Spleen (tissue), 13 donors: ENCODE measurements at regions of chrX and their contacts with region 1.

Region 1: DNA sequence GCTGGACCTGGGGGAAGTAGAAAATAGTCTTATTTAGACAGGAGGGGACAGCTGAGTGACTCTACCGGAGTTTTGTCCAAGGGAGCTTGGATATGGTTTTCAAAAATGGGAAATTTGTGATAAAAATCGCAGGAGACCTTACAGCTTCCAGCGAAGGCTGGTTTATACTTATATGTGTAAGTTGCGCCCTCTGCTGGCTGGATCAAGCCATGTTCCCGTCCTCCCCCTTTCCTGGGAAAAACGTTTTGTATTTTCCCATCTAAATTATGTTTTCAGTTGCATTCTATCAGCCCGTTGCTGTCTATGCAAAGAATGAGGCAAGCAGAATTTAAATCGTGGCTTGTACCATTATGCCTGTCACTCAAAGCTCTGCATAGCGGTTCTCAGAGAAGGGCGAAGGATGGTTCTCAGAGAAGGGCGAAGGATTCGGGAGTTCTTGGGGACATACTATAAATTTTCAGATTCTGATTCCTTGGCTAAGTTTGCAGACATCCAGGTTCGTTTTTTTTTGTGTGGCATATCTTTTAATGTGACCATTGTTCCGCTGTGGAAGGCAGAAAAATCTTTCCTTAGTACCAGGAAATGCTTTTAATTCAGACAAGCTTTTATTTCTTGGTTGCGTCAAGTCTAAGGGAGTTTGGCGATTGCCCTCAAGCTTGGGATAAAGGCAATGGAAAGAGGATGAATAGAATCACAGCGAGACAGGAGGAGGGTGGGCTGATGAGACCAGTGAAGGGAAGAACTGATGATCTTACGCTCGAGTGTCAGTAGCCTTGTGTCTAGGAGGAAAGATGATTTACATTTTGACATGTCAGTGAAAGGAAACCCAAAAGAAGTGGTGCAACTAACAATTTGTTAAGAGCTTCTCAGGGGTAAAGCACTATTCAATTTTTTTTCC is 128.5 kb upstream of the ARX start:
- DNase-seq: no peak
- H3K4me3 ChIP-seq: no peak overlapping the region
- H3K27ac ChIP-seq: no peak overlapping the region
- H3K4me1 ChIP-seq: no peaks in the 10 kb centered on the region
- H3K27me3 ChIP-seq: peaks cover 0 to 17% (median 0%) of the 10 kb centered on the region in 7 donors
- CTCF ChIP-seq: peak; percentile 31 to 75 (median 62)
- POLR2A ChIP-seq: no peak

Region 2: GRCh38 chrX:24759786-24760185 is 384.5 kb before region 1 on chrX:
- intact Hi-C with region 1: loop called (anchors 5 kb)
- DNase-seq: no peak
- H3K4me3 ChIP-seq: no peak overlapping the region
- H3K27ac ChIP-seq: no peak overlapping the region
- H3K4me1 ChIP-seq: no peaks in the 10 kb centered on the region
- H3K27me3 ChIP-seq: peaks cover 0 to 6% (median 0%) of the 10 kb centered on the region in 7 donors
- CTCF ChIP-seq: no peak
- POLR2A ChIP-seq: no peak

Region 3: GRCh38 chrX:24846551-24847157 is 297.6 kb before region 1 on chrX:
- intact Hi-C with region 1: loop called (anchors 10 kb)
- DNase-seq: no peak
- H3K4me3 ChIP-seq: no peak overlapping the region
- H3K27ac ChIP-seq: no peak overlapping the region
- H3K4me1 ChIP-seq: no peaks in the 10 kb centered on the region
- H3K27me3 ChIP-seq: no peaks in the 10 kb centered on the region
- CTCF ChIP-seq: no peak
- POLR2A ChIP-seq: no peak

Region 4: GRCh38 chrX:25285598-25285997 is 141.3 kb after region 1 on chrX:
- intact Hi-C with region 1: no loop called
- DNase-seq: no peak
- H3K4me3 ChIP-seq: no peak overlapping the region
- H3K27ac ChIP-seq: no peak overlapping the region
- H3K4me1 ChIP-seq: no peaks in the 10 kb centered on the region
- H3K27me3 ChIP-seq: no peaks in the 10 kb centered on the region
- CTCF ChIP-seq: no peak
- POLR2A ChIP-seq: no peak